Cardiac septum (tissue), 1 donor: ENCODE measurements at regions of chr5 and their contacts with region 1.

Region 1: DNA sequence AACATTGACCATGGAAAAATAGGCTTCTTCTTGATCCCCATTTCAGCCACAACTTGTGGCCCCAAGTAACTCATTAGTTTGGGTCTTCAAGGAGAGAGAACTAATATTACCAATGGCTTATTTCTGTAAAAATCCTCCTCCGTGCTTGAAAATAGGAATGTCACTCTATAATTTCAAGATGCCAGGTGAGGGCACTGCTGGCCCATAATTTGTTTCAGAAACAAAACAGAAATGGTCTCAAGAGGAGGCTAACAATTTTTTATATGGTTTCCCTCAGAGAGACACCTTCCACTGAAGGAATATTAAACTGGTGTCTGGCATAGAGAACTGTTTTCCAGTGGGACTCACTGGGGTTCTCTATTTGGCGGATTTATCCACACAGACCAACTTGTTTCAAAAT is 437.0 kb upstream of the TRPC7 start:
- DNase-seq: no peak

Region 2: DNA sequence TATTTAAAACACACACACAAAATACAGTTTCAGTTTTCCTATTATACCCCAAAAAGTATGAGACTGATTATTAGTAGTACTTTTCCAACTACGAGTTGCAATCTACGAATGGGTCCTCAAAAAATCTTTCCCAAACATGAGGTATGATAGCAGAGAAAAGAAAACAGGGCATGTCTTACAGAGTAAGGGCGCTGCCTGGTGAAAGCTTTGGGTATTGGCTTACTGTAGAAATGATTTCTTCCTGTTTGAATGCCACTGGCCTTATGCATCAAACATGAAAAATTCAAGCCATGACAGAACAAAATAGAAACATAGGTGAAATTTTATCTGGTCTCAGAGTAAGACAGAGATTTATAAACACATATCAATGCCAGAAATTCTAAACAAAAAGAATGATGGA is 248.8 kb after region 1 on chr5:
- intact Hi-C with region 1: loop called (anchors 10 kb)
- DNase-seq: no peak

Region 3: DNA sequence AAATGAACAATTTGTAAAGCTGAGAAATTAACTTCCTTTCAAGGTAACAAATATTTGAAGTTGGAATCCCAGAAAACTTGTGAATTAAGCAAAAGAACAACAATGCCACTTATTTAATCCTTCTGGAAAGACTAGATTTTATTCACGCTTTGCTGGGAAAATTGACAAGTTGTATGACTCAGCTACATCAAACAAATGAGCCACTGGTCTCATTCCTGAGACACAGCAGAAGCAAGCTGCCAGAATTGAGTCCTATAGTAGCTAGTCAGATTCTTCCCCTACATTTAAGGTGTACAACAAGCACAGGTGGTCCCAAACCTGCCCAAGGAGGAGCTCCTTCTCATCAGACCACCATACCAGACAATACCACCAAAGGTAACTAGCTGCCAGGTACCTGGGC is 416.1 kb after region 1 on chr5:
- intact Hi-C with region 1: loop called (anchors 5 kb)
- DNase-seq: no peak

Region 4: DNA sequence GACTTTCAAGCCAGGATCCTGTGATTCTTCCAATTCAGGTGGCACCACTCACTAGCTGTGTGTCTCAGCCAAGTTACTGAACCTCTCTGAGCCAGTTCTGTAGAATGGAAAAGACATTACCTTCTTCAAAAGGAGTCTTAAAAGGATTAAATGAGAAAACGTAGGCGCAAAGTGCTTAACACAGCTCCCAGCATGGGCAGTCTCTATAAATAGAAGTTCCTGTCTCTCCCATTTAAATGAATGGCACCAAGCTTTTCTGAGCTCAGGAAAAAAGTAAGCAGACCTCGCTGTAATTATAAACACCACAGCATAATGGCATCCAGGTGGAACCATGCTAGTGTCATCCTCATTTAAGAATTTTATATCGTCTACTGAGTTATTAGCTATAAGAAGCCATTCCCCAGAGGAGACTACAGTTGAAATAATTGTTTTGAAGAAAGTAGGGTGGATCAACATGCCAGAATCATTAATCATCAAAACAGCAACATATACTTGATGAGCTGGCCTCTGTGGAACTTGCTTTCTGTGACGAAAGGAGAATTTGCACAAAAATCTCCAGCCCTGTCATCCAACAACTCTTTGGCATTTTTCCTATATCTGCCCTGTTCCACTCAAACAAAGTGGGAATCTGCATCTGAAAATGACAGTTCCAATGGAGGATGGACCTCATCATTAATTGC is 507.8 kb after region 1 on chr5:
- intact Hi-C with region 1: loop called (anchors 10 kb)
- DNase-seq: no peak

Region 5: GRCh38 chr5:137498736-137499505 is 696.5 kb after region 1 on chr5 and contains the start of gene SPOCK1:
- intact Hi-C with region 1: loop called (anchors 10 kb)
- DNase-seq: no peak
- total RNA-seq, gene SPOCK1: 43.4 TPM